Activated CD8-positive, alpha-beta T cell treated with anti-CD3 and anti-CD28 coated beads for 36 hours (primary cell): ENCODE measurements at regions of chr5 and their contacts with region 1.

Region 1: GRCh38 chr5:149381987-149382340 is 2.9 kb upstream of the IL17B start:
- DNase-seq: peak; percentile 80
- ATAC-seq: peak; percentile 93
- H3K4me3 Mint-ChIP-seq: no peak overlapping the region
- H3K27ac Mint-ChIP-seq: no peak overlapping the region
- H3K4me1 Mint-ChIP-seq: peaks cover 4% of the 10 kb centered on the region
- H3K27me3 Mint-ChIP-seq: no peaks in the 10 kb centered on the region
- CTCF ChIP-seq: peak; percentile 80

Region 2: GRCh38 chr5:149317281-149318048 is 64.5 kb before region 1 on chr5:
- CTCF ChIA-PET with region 1: interaction called, 14 read pairs
- POLR2A ChIA-PET with region 1: no interaction called
- intact Hi-C with region 1: no loop called
- DNase-seq: peak; percentile 59
- ATAC-seq: peak; percentile 69
- H3K4me3 Mint-ChIP-seq: no peak overlapping the region
- H3K27ac Mint-ChIP-seq: no peak overlapping the region
- H3K4me1 Mint-ChIP-seq: no peaks in the 10 kb centered on the region
- H3K27me3 Mint-ChIP-seq: no peaks in the 10 kb centered on the region
- CTCF ChIP-seq: peak; percentile 72

Region 3: GRCh38 chr5:149567226-149567625 is 185.3 kb after region 1 on chr5:
- CTCF ChIA-PET with region 1: interaction called, 37 read pairs
- POLR2A ChIA-PET with region 1: interaction called, 4 read pairs
- intact Hi-C with region 1: loop called (anchors 2 kb)
- DNase-seq: no peak
- ATAC-seq: no peak
- H3K4me3 Mint-ChIP-seq: no peak overlapping the region
- H3K27ac Mint-ChIP-seq: no peak overlapping the region
- H3K4me1 Mint-ChIP-seq: peaks cover 13% of the 10 kb centered on the region
- H3K27me3 Mint-ChIP-seq: no peaks in the 10 kb centered on the region
- CTCF ChIP-seq: no peak